Endothelial cell of umbilical vein (primary cell): ENCODE measurements at regions of chr20 and their contacts with region 1.

Region 1: GRCh38 chr20:17536944-17537444 is 5.8 kb upstream of the BFSP1 start:
- DNase-seq: peak; percentile 86
- H3K4me3 ChIP-seq: no peak overlapping the region
- H3K27ac ChIP-seq: no peak overlapping the region
- H3K4me1 ChIP-seq: peaks cover 3% of the 10 kb centered on the region
- H3K27me3 ChIP-seq: no peaks in the 10 kb centered on the region
- CTCF ChIP-seq: peak; percentile 85 to 86
- POLR2A ChIP-seq: no peak

Region 2: GRCh38 chr20:17491041-17491440 is 46.0 kb before region 1 on chr20:
- CTCF ChIA-PET with region 1: no interaction called
- POLR2A ChIA-PET with region 1: no interaction called
- dilution Hi-C with region 1: no loop called
- intact Hi-C with region 1: no loop called
- DNase-seq: no peak
- H3K4me3 ChIP-seq: no peak overlapping the region
- H3K27ac ChIP-seq: no peak overlapping the region
- H3K4me1 ChIP-seq: no peaks in the 10 kb centered on the region
- H3K27me3 ChIP-seq: peaks cover 4 to 5% of the 10 kb centered on the region in 2 experiments
- CTCF ChIP-seq: no peak
- POLR2A ChIP-seq: no peak

Region 3: GRCh38 chr20:17558154-17558940 is 21.4 kb after region 1 on chr20:
- CTCF ChIA-PET with region 1: interaction called, 30 read pairs
- POLR2A ChIA-PET with region 1: interaction called, 3 read pairs
- dilution Hi-C with region 1: no loop called
- intact Hi-C with region 1: loop called (anchors 1 kb)
- DNase-seq: peak; percentile 95
- H3K4me3 ChIP-seq: peak overlapping the region; percentile 2 to 38 (median 4)
- H3K27ac ChIP-seq: peak overlapping the region; percentile 96
- H3K4me1 ChIP-seq: peaks cover 41% of the 10 kb centered on the region
- H3K27me3 ChIP-seq: no peaks in the 10 kb centered on the region
- CTCF ChIP-seq: no peak
- POLR2A ChIP-seq: peak; percentile 89

Region 4: DNA sequence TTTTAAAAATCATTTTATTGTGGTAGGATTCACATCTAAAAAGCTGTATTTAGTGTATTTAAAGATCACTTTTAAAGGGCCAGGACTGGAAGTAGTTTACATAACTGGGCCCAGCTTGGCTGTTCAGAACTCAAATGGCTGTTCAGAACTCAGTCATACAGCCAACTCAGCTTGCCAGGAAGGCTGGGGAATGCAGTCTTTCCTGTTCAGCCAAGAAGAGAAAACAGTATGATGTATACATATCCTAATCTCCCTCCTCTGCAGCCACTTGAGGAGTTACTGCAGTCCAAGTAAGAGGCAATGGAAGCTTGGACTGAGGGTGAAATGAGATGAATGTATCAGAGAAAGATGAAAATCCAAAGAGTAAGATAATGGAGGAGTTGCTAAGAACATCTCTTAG is 57.4 kb after region 1 on chr20:
- CTCF ChIA-PET with region 1: interaction called, 25 read pairs
- POLR2A ChIA-PET with region 1: no interaction called
- dilution Hi-C with region 1: loop called (anchors 5 kb)
- intact Hi-C with region 1: no loop called
- DNase-seq: peak; percentile 89
- H3K4me3 ChIP-seq: no peak overlapping the region
- H3K27ac ChIP-seq: peak overlapping the region; percentile 9
- H3K4me1 ChIP-seq: peaks cover 21% of the 10 kb centered on the region
- H3K27me3 ChIP-seq: no peaks in the 10 kb centered on the region
- CTCF ChIP-seq: no peak
- POLR2A ChIP-seq: no peak

Region 5: GRCh38 chr20:17611540-17612286 is 74.7 kb after region 1 on chr20:
- CTCF ChIA-PET with region 1: interaction called, 89 read pairs
- POLR2A ChIA-PET with region 1: no interaction called
- dilution Hi-C with region 1: no loop called
- intact Hi-C with region 1: loop called (anchors 1 kb)
- DNase-seq: no peak
- H3K4me3 ChIP-seq: no peak overlapping the region
- H3K27ac ChIP-seq: peak overlapping the region; percentile 15
- H3K4me1 ChIP-seq: no peaks in the 10 kb centered on the region
- H3K27me3 ChIP-seq: no peaks in the 10 kb centered on the region
- CTCF ChIP-seq: peak; percentile 28 to 49
- POLR2A ChIP-seq: no peak

Region 6: GRCh38 chr20:17648791-17649730 is 112.1 kb after region 1 on chr20:
- CTCF ChIA-PET with region 1: interaction called, 25 read pairs
- POLR2A ChIA-PET with region 1: no interaction called
- dilution Hi-C with region 1: no loop called
- intact Hi-C with region 1: loop called (anchors 1 kb)
- DNase-seq: no peak
- H3K4me3 ChIP-seq: no peak overlapping the region
- H3K27ac ChIP-seq: no peak overlapping the region
- H3K4me1 ChIP-seq: peaks cover 11% of the 10 kb centered on the region
- H3K27me3 ChIP-seq: no peaks in the 10 kb centered on the region
- CTCF ChIP-seq: peak; percentile 43 to 67
- POLR2A ChIP-seq: no peak

Region 7: GRCh38 chr20:17938871-17939619 is 402.1 kb after region 1 on chr20:
- CTCF ChIA-PET with region 1: interaction called, 18 read pairs
- POLR2A ChIA-PET with region 1: no interaction called
- dilution Hi-C with region 1: no loop called
- intact Hi-C with region 1: loop called (anchors 5 kb)
- DNase-seq: peak; percentile 70
- H3K4me3 ChIP-seq: no peak overlapping the region
- H3K27ac ChIP-seq: no peak overlapping the region
- H3K4me1 ChIP-seq: peaks cover 14% of the 10 kb centered on the region
- H3K27me3 ChIP-seq: no peaks in the 10 kb centered on the region
- CTCF ChIP-seq: peak; percentile 85 to 97
- POLR2A ChIP-seq: peak; percentile 14